ENCODE measurements at regions of chr12 and their contacts with region 1.

Region 1: DNA sequence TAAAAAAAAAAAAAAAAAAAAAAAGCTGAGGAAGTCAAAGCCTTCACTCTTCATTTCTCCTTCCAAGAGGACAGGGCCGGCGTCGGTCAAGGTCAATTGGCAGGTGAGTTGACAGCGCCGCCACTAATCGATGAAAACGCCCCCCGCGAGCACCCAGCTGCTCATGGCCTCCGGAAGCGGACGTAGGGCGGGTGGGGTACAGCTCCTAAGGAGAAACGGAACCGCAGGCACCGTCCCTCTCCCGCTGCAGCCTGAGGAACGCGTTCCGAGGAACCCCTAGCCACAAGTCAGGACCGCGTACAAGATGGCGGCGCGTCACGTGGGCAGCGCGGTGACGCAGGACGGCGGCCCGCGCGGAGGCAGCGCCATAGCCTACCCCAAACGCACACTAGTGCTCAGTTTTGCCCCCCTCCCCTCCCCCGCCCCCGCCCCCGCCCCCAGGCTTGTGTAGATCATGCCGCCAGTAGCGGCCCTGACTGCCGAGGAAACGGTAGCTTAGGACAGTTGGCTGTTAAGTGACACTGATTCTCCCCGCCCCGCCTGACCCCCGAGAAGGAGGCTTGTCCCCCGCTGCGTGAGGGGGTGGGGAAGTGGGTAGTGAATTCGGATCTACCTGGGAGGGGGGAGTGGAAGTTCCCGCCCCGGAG is at the start of gene ATF1:
- DNase-seq: peak; percentile 88 to 97 (median 91)
- ATAC-seq: peak; percentile 87
- H3K4me3 ChIP-seq: peak within 1 kb of the TSS; percentile 84
- H3K27ac ChIP-seq: peak within 1 kb of the TSS; percentile 99
- H3K4me1 ChIP-seq: peaks cover 17 to 18% of the 10 kb centered on the region in 2 experiments
- H3K27me3 ChIP-seq: no peaks in the 10 kb centered on the region
- CTCF ChIP-seq: no peak
- EP300 ChIP-seq: peak; percentile 37; the same call in 1 of the 2 replicates
- POLR2A ChIP-seq: peak; percentile 93
- RAD21 ChIP-seq: no peak
- polyA plus RNA-seq, gene ATF1: 19.8 to 24.5 TPM

Region 2: DNA sequence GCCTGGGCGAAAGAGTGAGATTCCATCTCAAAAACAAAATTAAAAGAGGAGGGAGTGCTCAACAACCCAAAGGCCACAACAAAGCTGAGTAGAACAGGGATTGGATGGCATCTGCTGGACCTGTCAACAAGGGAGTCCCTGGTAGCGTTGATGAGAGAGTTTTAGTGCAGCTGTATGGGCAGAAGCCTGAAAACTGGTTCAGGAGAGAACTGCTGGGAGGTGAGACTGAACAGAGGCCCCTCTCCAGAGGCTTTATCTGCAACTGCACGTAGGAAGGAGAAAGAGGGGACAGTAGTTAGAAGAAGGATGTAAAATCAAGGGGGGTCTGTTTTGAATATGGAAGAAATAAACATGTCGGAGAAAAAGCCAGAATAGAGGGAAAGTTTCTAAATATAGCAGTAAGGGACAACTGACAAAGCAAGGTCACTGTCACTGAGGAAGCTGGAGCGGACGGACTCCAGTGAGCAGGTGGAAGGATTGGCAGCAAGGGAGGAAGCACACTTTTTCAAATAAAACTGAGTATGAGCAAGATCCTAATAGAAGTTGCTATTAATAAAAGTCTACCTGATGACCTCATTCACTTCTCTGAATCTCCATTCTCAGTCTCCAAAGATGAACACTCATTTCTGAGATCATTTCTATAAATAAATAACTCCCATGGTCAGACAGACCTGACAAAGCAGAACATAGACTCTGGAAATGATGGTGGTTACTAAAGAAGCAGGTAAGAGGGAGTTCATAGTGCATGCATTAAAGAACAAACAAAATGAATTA is 11.6 kb before region 1 on chr12:
- CTCF ChIA-PET with region 1: no interaction called
- POLR2A ChIA-PET with region 1: interaction called, 15 read pairs
- in situ Hi-C with region 1: no loop called
- intact Hi-C with region 1: no loop called
- DNase-seq: peak in 1 of 4 experiments; percentile 4
- ATAC-seq: no peak; the same call in 2 of the 3 replicates
- H3K4me3 ChIP-seq: no peak overlapping the region
- H3K27ac ChIP-seq: no peak overlapping the region
- H3K4me1 ChIP-seq: peaks cover 0 to 20% of the 10 kb centered on the region in 2 experiments; a peak in 4 of 5 replicates
- H3K27me3 ChIP-seq: no peaks in the 10 kb centered on the region
- CTCF ChIP-seq: no peak
- EP300 ChIP-seq: no peak
- POLR2A ChIP-seq: no peak
- RAD21 ChIP-seq: no peak

Region 3: GRCh38 chr12:50806176-50806575 is 42.4 kb after region 1 on chr12:
- CTCF ChIA-PET with region 1: no interaction called
- POLR2A ChIA-PET with region 1: no interaction called
- in situ Hi-C with region 1: loop called (anchors 5 kb)
- intact Hi-C with region 1: no loop called
- DNase-seq: no peak
- ATAC-seq: 0 out of 3 replicates have a peak, but pooled peaks have one; percentile 31
- H3K4me3 ChIP-seq: no peak overlapping the region
- H3K27ac ChIP-seq: no peak overlapping the region
- H3K4me1 ChIP-seq: peaks cover 0 to 4% of the 10 kb centered on the region in 2 experiments; a peak in 1 of 5 replicates
- H3K27me3 ChIP-seq: no peaks in the 10 kb centered on the region
- CTCF ChIP-seq: no peak
- EP300 ChIP-seq: no peak
- POLR2A ChIP-seq: no peak
- RAD21 ChIP-seq: no peak

Region 4: GRCh38 chr12:50924439-50925341 is 160.9 kb after region 1 on chr12:
- CTCF ChIA-PET with region 1: no interaction called
- POLR2A ChIA-PET with region 1: interaction called, 3 read pairs
- in situ Hi-C with region 1: no loop called
- intact Hi-C with region 1: loop called (anchors 10 kb)
- DNase-seq: peak; percentile 84 to 93 (median 87)
- ATAC-seq: peak; percentile 87
- H3K4me3 ChIP-seq: peak overlapping the region; percentile 61
- H3K27ac ChIP-seq: peak overlapping the region; percentile 95
- H3K4me1 ChIP-seq: peaks cover 3 to 21% of the 10 kb centered on the region in 2 experiments; a peak in 4 of 5 replicates
- H3K27me3 ChIP-seq: no peaks in the 10 kb centered on the region
- CTCF ChIP-seq: no peak
- EP300 ChIP-seq: no peak
- POLR2A ChIP-seq: peak; percentile 66
- RAD21 ChIP-seq: no peak

Region 5: DNA sequence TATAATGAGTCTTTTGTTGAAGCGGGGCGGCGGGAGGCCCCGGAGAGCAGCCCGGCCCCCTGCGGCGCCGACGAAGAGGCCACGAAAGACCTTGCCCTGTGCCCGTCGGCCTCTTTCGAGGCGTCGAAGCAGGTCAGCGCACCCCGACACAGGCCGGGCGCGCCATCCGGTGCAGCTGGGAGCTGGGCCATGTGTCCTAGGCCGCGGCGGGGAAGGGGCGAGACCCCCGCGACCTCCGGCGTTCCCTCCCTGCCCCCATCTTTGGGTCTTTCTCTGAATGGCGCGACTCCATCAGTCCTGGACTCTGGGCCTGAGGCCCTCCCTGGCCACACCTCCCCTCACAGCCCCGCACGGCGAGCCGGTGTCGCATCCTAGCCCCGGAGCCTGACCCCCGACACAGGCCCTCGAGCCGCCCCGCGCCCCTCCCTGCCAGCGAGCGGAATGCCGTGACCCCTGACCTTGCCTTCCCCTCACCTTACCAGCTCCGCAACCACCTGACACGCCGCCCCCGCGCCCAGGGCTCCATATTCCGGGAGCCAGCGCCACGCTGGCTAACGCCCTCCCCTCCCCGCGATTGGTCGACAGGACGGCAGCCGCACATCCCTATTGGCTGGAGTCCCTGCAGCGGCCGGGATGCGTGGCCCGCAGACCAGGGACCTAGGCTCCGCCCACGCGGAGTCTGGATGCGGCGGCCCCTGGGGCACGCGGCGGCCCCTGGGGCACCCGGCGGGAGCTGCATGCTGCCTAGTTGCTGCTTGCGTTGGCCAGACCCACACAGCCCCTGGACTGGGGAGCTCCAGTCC is 262.3 kb after region 1 on chr12 and contains the start of gene SLC11A2:
- CTCF ChIA-PET with region 1: interaction called, 5 read pairs
- POLR2A ChIA-PET with region 1: interaction called, 10 read pairs
- in situ Hi-C with region 1: no loop called
- intact Hi-C with region 1: loop called (anchors 2 kb)
- DNase-seq: peak; percentile 98 to 99 (median 98)
- ATAC-seq: peak; percentile 91
- H3K4me3 ChIP-seq: peak within 1 kb of the TSS; percentile 66
- H3K27ac ChIP-seq: peak within 1 kb of the TSS; percentile 91
- H3K4me1 ChIP-seq: peaks cover 32 to 38% of the 10 kb centered on the region in 2 experiments
- H3K27me3 ChIP-seq: no peaks in the 10 kb centered on the region
- CTCF ChIP-seq: peak; percentile 18 to 28 (median 18); a peak in 3 of 6 replicates
- EP300 ChIP-seq: no peak; the same call in 1 of the 2 replicates
- POLR2A ChIP-seq: peak; percentile 83
- RAD21 ChIP-seq: peak in 1 of 2 experiments; percentile 12; a peak in 1 of 4 replicates
- polyA plus RNA-seq, gene SLC11A2: 21.1 to 27.6 TPM

Region 6: GRCh38 chr12:51430231-51430906 is 666.6 kb after region 1 on chr12:
- CTCF ChIA-PET with region 1: no interaction called
- POLR2A ChIA-PET with region 1: no interaction called
- in situ Hi-C with region 1: no loop called
- intact Hi-C with region 1: no loop called
- DNase-seq: no peak
- ATAC-seq: no peak
- H3K4me3 ChIP-seq: no peak overlapping the region
- H3K27ac ChIP-seq: no peak overlapping the region
- H3K4me1 ChIP-seq: no peaks in the 10 kb centered on the region
- H3K27me3 ChIP-seq: peaks cover 18 to 20% of the 10 kb centered on the region in 2 experiments
- CTCF ChIP-seq: no peak
- EP300 ChIP-seq: no peak
- POLR2A ChIP-seq: no peak
- RAD21 ChIP-seq: no peak